GM12878 (cell line): ENCODE measurements at regions of chr5 and their contacts with region 1.

Region 1: DNA sequence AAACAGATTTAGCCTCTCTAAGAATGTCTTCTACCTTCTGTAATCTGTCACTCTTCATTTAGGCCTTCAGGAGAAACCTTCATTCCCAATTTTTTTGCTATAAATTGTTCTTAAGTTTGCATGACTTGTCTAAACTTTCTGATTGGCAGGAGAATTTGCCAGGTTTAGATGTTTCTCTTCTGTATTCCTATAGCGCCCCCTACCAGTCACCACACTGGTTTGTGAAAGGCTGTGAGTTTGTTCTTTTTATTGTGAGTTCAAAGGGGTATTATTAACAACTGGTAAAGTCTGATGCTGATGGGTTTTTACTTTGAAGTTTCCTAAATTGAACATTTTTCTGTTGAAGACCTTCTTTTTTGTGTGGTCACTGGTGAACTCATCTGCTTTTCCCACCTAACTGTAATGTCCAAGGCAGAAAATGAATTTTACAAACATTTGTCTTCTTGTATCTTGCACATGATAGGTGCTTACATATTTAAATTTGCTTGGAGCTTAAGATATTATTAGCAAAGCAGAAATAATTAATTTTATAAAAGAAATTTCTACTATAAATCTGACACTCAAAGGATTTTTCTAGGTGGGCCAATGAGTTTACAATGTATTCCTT is 18.4 kb upstream of the F2RL2 start:
- DNase-seq: peak; percentile 15
- ATAC-seq: peak; percentile 89
- H3K4me3 ChIP-seq: no peak overlapping the region
- H3K27ac ChIP-seq: no peak overlapping the region
- H3K4me1 ChIP-seq: peaks cover 11% of the 10 kb centered on the region; the same call in 1 of the 2 replicates
- H3K27me3 ChIP-seq: no peaks in the 10 kb centered on the region
- CTCF ChIP-seq: peak; percentile 74 to 82 (median 79)
- EP300 ChIP-seq: no peak
- POLR2A ChIP-seq: no peak
- RAD21 ChIP-seq: peak; percentile 94

Region 2: DNA sequence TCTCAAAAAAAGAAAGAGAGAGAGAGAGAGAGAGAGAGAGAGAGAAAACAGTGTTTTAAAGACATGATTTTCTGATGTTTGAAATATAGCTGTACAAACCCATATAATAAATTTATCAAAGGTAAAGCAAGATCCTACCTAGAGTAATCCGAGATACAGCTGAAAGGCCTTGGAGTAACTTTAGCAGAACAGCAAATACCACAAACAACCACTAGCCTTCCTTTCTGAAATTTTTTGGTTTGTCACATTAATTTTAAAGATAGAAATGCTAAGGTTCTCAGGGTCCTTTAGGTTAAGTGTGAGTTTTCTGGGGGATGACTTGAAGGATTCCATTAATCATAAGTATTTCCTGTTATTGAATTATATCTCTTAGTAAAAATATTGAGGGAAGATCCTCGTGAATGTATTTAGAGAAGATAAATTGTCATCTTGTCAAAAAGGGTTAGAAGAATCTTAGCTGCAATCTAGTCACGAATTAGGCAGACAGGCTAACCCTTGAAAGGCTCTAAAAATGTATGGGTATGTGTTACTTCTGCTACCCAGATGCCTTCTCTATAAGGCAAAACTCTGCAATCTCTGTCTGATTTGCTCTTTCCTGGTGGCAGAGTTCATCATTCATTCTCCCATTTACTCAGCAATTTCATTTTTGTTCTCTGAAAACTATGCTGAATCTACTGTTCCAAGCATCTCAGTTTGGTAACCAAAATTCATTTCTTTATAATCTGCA is 45.7 kb before region 1 on chr5:
- CTCF ChIA-PET with region 1: interaction called, 69 read pairs
- POLR2A ChIA-PET with region 1: no interaction called
- RAD21 ChIA-PET with region 1: interaction called, 17 read pairs
- SMC1A ChIA-PET with region 1: interaction called, 14 read pairs
- in situ Hi-C with region 1: loop called (anchors 5 kb)
- intact Hi-C with region 1: no loop called
- DNase-seq: no peak
- ATAC-seq: no peak
- H3K4me3 ChIP-seq: no peak overlapping the region
- H3K27ac ChIP-seq: no peak overlapping the region
- H3K4me1 ChIP-seq: no peaks in the 10 kb centered on the region
- H3K27me3 ChIP-seq: no peaks in the 10 kb centered on the region
- CTCF ChIP-seq: no peak
- EP300 ChIP-seq: no peak
- POLR2A ChIP-seq: no peak
- RAD21 ChIP-seq: no peak

Region 3: DNA sequence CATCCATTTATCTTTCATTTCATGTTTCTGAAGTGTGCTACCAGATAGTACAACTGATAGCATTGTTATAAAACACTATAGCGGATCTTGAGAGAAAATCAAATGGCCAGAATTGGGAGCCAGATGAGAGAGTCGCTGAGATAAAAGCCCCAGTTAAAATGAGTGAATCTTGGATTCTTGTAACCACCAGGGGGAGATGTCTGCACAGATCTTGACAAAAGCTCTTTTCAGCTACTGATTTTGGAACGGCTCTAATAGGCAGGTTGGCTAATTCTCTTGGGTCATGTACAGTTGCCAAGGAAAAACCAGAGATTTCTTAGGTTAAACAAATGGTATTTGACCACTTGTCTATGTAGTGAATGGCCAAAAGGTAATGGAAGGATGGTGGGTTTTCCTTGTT is 40.1 kb before region 1 on chr5:
- CTCF ChIA-PET with region 1: interaction called, 69 read pairs
- POLR2A ChIA-PET with region 1: no interaction called
- RAD21 ChIA-PET with region 1: interaction called, 17 read pairs
- SMC1A ChIA-PET with region 1: interaction called, 25 read pairs
- in situ Hi-C with region 1: loop called (anchors 5 kb)
- intact Hi-C with region 1: loop called (anchors 1 kb)
- DNase-seq: no peak
- ATAC-seq: peak; percentile 89
- H3K4me3 ChIP-seq: no peak overlapping the region
- H3K27ac ChIP-seq: no peak overlapping the region
- H3K4me1 ChIP-seq: no peaks in the 10 kb centered on the region
- H3K27me3 ChIP-seq: no peaks in the 10 kb centered on the region
- CTCF ChIP-seq: peak; percentile 58 to 72 (median 71); a peak in 5 of 6 replicates
- EP300 ChIP-seq: no peak
- POLR2A ChIP-seq: no peak
- RAD21 ChIP-seq: peak; percentile 94

Region 4: GRCh38 chr5:76608833-76609232 is 32.8 kb before region 1 on chr5:
- CTCF ChIA-PET with region 1: interaction called, 12 read pairs
- POLR2A ChIA-PET with region 1: interaction called, 4 read pairs
- RAD21 ChIA-PET with region 1: interaction called, 10 read pairs
- SMC1A ChIA-PET with region 1: interaction called, 8 read pairs
- in situ Hi-C with region 1: loop called (anchors 5 kb)
- intact Hi-C with region 1: no loop called
- DNase-seq: no peak
- ATAC-seq: peak; percentile 59
- H3K4me3 ChIP-seq: no peak overlapping the region
- H3K27ac ChIP-seq: no peak overlapping the region
- H3K4me1 ChIP-seq: no peaks in the 10 kb centered on the region
- H3K27me3 ChIP-seq: no peaks in the 10 kb centered on the region
- CTCF ChIP-seq: no peak
- EP300 ChIP-seq: peak in 1 of 2 experiments; percentile 23; a peak in 1 of 4 replicates
- POLR2A ChIP-seq: no peak
- RAD21 ChIP-seq: no peak

Region 5: GRCh38 chr5:76626738-76627137 is 14.9 kb before region 1 on chr5:
- CTCF ChIA-PET with region 1: interaction called, 8 read pairs
- POLR2A ChIA-PET with region 1: interaction called, 6 read pairs
- RAD21 ChIA-PET with region 1: no interaction called
- SMC1A ChIA-PET with region 1: interaction called, 10 read pairs
- in situ Hi-C with region 1: no loop called
- intact Hi-C with region 1: no loop called
- DNase-seq: no peak
- ATAC-seq: no peak; the same call in 2 of the 3 replicates
- H3K4me3 ChIP-seq: no peak overlapping the region
- H3K27ac ChIP-seq: no peak overlapping the region
- H3K4me1 ChIP-seq: 0 out of 2 replicates have a peak, but pooled peaks cover 5% of the 10 kb centered on the region
- H3K27me3 ChIP-seq: no peaks in the 10 kb centered on the region
- CTCF ChIP-seq: no peak
- EP300 ChIP-seq: no peak
- POLR2A ChIP-seq: no peak
- RAD21 ChIP-seq: no peak

Region 6: DNA sequence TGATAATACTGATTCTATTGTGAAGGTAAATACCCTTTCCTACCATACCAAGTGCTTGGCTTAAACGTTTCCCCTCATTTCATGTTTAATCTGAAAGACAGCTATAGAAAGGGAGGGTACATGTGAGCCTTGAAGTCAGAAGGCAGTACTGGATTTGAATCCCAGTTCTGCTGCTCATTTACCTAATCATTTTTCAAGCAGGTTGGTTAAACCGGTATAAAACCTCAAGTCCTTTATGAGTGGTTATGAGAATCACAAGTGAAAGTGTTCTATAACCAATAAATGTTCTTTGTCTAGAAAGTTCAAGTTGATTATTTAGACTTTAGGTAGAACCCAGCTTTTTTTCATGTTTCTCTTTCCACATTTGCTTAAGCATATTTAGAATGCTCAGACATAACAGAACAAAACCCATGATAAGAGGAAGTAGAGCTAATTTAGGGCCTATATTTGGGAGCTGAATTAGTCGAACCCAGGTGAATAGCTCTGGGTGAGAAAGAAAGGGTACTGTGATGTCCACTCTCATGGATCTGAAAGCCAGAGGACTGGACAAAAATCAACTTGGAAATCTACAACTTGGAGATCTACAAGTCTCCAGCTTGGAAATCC is 11.3 kb after region 1 on chr5:
- CTCF ChIA-PET with region 1: interaction called, 31 read pairs
- POLR2A ChIA-PET with region 1: no interaction called
- RAD21 ChIA-PET with region 1: interaction called, 5 read pairs
- SMC1A ChIA-PET with region 1: interaction called, 10 read pairs
- in situ Hi-C with region 1: no loop called
- intact Hi-C with region 1: no loop called
- DNase-seq: peak; percentile 12
- ATAC-seq: peak; percentile 50
- H3K4me3 ChIP-seq: no peak overlapping the region
- H3K27ac ChIP-seq: no peak overlapping the region
- H3K4me1 ChIP-seq: peaks cover 6% of the 10 kb centered on the region; the same call in 1 of the 2 replicates
- H3K27me3 ChIP-seq: no peaks in the 10 kb centered on the region
- CTCF ChIP-seq: no peak
- EP300 ChIP-seq: no peak
- POLR2A ChIP-seq: no peak
- RAD21 ChIP-seq: no peak

Region 7: GRCh38 chr5:77186652-77187370 is 545.2 kb after region 1 on chr5:
- CTCF ChIA-PET with region 1: no interaction called
- POLR2A ChIA-PET with region 1: no interaction called
- RAD21 ChIA-PET with region 1: no interaction called
- SMC1A ChIA-PET with region 1: no interaction called
- in situ Hi-C with region 1: no loop called
- intact Hi-C with region 1: no loop called
- DNase-seq: no peak
- ATAC-seq: no peak
- H3K4me3 ChIP-seq: no peak overlapping the region
- H3K27ac ChIP-seq: no peak overlapping the region
- H3K4me1 ChIP-seq: no peaks in the 10 kb centered on the region
- H3K27me3 ChIP-seq: peaks cover 0 to 2% of the 10 kb centered on the region in 2 experiments; a peak in 3 of 4 replicates
- CTCF ChIP-seq: no peak
- EP300 ChIP-seq: no peak
- POLR2A ChIP-seq: no peak
- RAD21 ChIP-seq: no peak